ENCODE measurements at regions of chr11 and their contacts with region 1.

Region 1: DNA sequence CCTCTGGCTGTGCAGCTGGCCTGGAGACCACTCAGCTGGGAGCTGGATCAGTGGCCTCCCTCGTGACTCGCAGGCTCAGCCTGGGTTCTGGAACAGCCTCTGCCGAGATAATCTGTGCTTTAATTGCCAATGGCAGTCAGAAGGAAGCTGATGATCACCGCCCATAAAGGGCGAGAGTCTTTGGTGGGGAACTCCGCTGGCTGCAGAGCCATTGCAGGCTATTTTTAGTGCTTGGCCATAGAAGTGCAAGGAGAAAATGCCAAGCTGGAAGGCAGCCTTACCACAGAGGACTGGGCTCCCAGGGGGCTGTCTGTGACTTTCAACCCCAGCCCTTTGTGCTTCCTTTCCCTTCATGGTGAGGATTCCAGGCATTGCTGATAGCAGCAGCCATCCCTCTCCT is 62.2 kb upstream of the TENM4 start:
- DNase-seq: peak in 4 of 5 donors; percentile 26 to 54 (median 35)
- H3K4me3 ChIP-seq: no peak overlapping the region
- H3K27ac ChIP-seq: no peak overlapping the region
- H3K4me1 ChIP-seq: peaks cover 1% of the 10 kb centered on the region
- H3K27me3 ChIP-seq: no peaks in the 10 kb centered on the region
- CTCF ChIP-seq: no peak
- EP300 ChIP-seq: no peak
- POLR2A ChIP-seq: no peak

Region 2: GRCh38 chr11:78659326-78660270 is 843.4 kb before region 1 on chr11:
- intact Hi-C with region 1: loop called in 1 of 4 experiments (anchors 10 kb)
- DNase-seq: no peak
- H3K4me3 ChIP-seq: no peak overlapping the region
- H3K27ac ChIP-seq: no peak overlapping the region
- H3K4me1 ChIP-seq: no peaks in the 10 kb centered on the region
- H3K27me3 ChIP-seq: no peaks in the 10 kb centered on the region
- CTCF ChIP-seq: no peak
- EP300 ChIP-seq: no peak
- POLR2A ChIP-seq: no peak

Region 3: GRCh38 chr11:79440441-79441194 is 62.4 kb before region 1 on chr11 and contains the start of gene TENM4:
- intact Hi-C with region 1: no loop called
- DNase-seq: peak; percentile 89 to 94 (median 93)
- H3K4me3 ChIP-seq: peak within 1 kb of the TSS; percentile 63
- H3K27ac ChIP-seq: peak within 1 kb of the TSS; percentile 70 to 84
- H3K4me1 ChIP-seq: peaks cover 9% of the 10 kb centered on the region
- H3K27me3 ChIP-seq: no peaks in the 10 kb centered on the region
- CTCF ChIP-seq: peak in 2 of 3 donors; percentile 39 to 57
- EP300 ChIP-seq: no peak
- POLR2A ChIP-seq: peak; percentile 82
- total RNA-seq, gene TENM4: 61.2 to 206 (median 117) TPM

Region 4: GRCh38 chr11:79525257-79525656 is 22.2 kb after region 1 on chr11:
- intact Hi-C with region 1: no loop called
- DNase-seq: no peak
- H3K4me3 ChIP-seq: no peak overlapping the region
- H3K27ac ChIP-seq: no peak overlapping the region
- H3K4me1 ChIP-seq: no peaks in the 10 kb centered on the region
- H3K27me3 ChIP-seq: no peaks in the 10 kb centered on the region
- CTCF ChIP-seq: no peak
- EP300 ChIP-seq: no peak
- POLR2A ChIP-seq: no peak